Activated CD4-positive, alpha-beta memory T cell treated with anti-CD3 and anti-CD28 coated beads for 36 hours (primary cell): ENCODE measurements at regions of chr2 and their contacts with region 1.

Region 1: DNA sequence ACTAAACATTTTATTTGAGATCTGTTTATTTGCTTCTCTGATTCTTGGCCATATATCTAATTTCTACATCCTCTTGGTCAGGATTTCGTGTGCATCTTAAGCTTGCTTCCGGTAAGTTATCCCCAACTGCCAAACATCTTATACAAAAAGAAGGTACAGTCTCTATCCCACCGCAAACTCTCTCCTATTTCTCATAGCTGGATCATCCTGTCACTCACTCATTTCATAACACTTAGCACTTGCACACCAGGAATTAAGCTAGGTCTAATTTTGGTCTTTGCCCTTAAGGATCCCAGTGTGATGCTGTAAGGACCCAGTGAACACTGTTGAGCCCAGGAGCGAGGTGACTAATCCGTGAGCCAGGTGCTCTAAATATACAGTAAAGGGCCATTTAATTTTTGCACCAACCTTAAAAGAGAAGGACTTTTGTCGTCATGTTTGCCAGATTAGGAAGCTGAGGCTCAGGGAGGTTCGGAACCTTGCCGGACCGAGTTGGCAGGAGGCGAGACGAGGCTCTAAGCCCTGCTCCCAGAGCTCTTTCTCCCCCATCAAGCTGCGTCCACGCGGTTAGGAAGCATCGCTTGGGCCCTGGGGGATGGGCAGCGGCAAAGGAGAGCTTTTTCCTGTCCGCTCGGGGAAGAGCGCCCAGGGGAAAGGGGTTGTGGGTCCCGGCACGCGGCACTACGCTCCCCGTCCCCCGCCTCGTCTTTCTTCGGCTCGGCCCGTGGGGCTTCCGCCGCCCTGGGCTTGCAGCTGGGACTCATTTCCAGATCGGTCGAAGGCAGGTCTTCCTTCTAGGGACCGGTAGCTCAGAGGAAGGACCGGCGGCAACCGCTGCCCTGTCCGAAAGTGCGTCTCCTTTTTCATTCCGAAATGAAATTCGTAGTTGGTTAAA is 4.1 kb upstream of the ITPRIPL1 start:
- DNase-seq: peak; percentile 52
- H3K4me3 Mint-ChIP-seq: peak overlapping the region; percentile 91
- H3K27ac Mint-ChIP-seq: peak overlapping the region; percentile 91
- H3K4me1 Mint-ChIP-seq: peaks cover 59% of the 10 kb centered on the region
- H3K27me3 Mint-ChIP-seq: no peaks in the 10 kb centered on the region

Region 2: GRCh38 chr2:96164459-96165184 is 156.4 kb before region 1 on chr2:
- CTCF ChIA-PET with region 1: no interaction called
- POLR2A ChIA-PET with region 1: interaction called, 3 read pairs
- intact Hi-C with region 1: loop called (anchors 5 kb)
- DNase-seq: peak; percentile 90
- H3K4me3 Mint-ChIP-seq: peak overlapping the region; percentile 87
- H3K27ac Mint-ChIP-seq: peak overlapping the region; percentile 100
- H3K4me1 Mint-ChIP-seq: peaks cover 72% of the 10 kb centered on the region
- H3K27me3 Mint-ChIP-seq: no peaks in the 10 kb centered on the region

Region 3: DNA sequence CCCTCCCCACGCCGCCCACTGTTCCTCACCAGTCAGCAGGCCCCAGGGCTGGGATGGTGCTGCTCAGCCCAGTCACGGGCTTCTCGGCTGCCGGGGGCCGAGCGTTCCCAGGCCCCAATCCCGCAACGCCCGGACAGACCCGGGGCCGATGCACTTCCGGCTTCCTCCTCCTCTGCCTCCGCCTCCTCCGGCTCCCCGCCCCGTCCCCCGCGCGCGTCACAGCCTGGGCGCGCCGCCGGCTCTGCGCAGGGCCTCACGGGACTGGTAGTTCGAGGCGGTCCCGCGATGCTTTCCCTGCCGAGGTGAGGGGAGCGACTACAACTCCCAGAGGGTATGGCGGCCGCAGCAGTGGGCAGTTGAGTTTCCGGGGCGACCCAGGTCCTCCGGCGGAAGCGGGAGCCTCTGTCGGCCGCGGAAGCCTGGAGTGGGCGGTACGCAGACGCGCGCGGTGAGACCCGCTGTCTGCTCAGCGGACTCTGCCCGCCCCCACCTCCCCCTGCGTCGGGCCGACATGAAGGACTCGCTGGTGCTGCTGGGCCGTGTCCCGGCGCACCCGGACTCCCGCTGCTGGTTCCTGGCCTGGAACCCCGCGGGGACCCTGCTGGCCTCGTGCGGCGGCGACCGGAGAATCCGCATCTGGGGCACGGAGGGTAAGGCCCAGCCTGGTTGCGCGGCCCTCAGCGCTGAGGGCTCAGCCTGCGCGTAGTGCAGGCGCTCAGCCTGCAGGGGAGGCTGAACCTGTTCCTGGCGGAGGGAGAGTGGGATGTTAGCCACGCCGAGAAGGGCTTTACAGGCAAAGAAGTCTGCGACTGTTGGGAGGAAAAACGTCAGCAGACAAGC is 54.9 kb before region 1 on chr2 and contains the starts of genes CIAO1 and TMEM127:
- CTCF ChIA-PET with region 1: interaction called, 9 read pairs
- POLR2A ChIA-PET with region 1: interaction called, 8 read pairs
- intact Hi-C with region 1: loop called (anchors 5 kb)
- DNase-seq: peak; percentile 99
- H3K4me3 Mint-ChIP-seq: peak within 1 kb of the TSS; percentile 99
- H3K27ac Mint-ChIP-seq: peak within 1 kb of the TSS; percentile 97
- H3K4me1 Mint-ChIP-seq: peaks cover 50% of the 10 kb centered on the region
- H3K27me3 Mint-ChIP-seq: no peaks in the 10 kb centered on the region
- total RNA-seq, gene CIAO1: 86.6 to 87.1 TPM
- total RNA-seq, gene TMEM127: 19.3 to 22.2 TPM

Region 4: DNA sequence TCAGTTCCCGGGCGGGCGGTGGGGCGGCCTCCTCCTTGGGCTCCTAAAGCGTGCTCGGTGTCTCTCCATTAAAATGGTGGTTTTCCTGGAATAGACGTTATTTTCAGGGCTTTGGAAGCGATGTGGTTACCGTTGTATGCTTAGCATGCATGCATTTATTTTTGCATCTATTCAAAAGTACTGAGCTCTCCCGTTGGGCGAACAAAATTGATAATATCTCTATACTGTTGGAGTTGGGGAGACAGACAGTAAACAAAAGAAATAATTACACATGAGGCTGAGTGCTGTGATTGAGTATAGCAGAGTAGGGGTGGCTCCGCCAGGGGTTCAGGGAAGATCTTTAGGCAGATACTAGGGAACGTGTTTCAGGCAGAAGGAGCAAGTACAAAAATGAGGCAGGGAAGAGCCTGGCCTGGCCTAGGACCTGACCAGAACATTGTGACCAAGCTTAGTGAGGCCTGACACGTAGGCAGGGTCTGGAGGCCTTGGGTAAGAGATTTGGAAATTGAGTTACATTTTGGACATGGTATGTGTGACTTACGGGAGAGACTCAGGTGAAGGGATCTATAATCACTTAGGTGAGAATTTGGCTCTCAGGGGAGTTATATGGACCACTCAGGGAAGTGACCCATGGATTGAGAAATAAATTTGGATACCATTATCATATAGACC is 15.3 kb after region 1 on chr2:
- CTCF ChIA-PET with region 1: interaction called, 5 read pairs
- POLR2A ChIA-PET with region 1: interaction called, 70 read pairs
- intact Hi-C with region 1: loop called (anchors 1 kb)
- DNase-seq: no peak
- H3K4me3 Mint-ChIP-seq: peak overlapping the region; percentile 94
- H3K27ac Mint-ChIP-seq: peak overlapping the region; percentile 84
- H3K4me1 Mint-ChIP-seq: peaks cover 51% of the 10 kb centered on the region
- H3K27me3 Mint-ChIP-seq: no peaks in the 10 kb centered on the region

Region 5: DNA sequence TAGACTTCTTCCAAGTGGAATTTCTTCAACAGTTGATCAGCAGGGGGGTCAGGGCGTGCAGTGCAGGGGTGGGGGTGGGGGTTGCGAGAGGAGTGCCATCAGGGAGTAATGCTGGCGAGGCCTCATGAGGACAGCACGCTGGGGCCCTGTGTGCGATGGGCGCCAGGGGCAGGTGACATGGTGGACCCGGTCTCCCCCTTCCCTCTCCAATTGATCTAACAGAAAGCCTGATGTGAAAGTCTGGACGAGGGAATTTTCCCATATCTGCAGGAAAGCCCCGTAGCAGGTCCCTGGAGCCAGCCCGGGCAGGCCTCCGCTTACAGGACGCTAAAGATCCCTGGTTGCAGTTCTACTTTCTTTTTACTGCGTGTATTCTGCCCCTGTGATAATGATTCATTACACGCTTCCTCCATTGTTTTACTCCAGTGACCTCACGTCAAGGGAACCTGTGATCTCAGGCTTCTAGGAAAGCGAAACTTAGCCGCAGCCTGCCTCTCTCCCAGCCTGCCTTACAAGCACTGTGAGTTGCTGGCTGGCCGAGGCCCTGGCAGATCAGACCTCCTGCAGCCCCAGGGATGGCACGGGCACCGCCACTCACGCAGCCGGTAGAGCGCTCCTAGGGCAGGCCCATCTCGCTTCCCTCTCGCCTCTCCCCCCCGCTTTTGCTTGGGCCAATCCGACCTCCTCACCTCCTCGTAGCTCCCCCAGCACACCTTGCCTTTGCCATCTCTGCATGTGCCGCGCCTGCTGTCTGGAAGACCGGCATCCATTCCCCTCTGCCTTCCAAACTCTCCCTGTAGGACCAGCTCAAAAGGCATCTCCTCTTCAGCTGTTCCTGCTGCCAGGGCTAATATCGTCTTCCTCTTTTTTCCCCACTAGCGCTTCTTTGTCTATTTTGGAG is 165.0 kb after region 1 on chr2:
- CTCF ChIA-PET with region 1: no interaction called
- POLR2A ChIA-PET with region 1: no interaction called
- intact Hi-C with region 1: loop called (anchors 1 kb)
- DNase-seq: peak; percentile 93
- H3K4me3 Mint-ChIP-seq: peak overlapping the region; percentile 95
- H3K27ac Mint-ChIP-seq: peak overlapping the region; percentile 99
- H3K4me1 Mint-ChIP-seq: peaks cover 47% of the 10 kb centered on the region
- H3K27me3 Mint-ChIP-seq: no peaks in the 10 kb centered on the region